ENCODE measurements at regions of chr19 and their contacts with region 1.

Region 1: GRCh38 chr19:40348125-40348913 is at the starts of genes C19orf47 and PLD3:
- DNase-seq: peak; percentile 99 to 100
- H3K4me3 ChIP-seq: peak within 1 kb of the TSS; percentile 80 to 94
- H3K27ac ChIP-seq: peak within 1 kb of the TSS; percentile 51 to 85
- H3K4me1 ChIP-seq: peaks cover 4 to 10% of the 10 kb centered on the region in 2 donors
- H3K27me3 ChIP-seq: no peaks in the 10 kb centered on the region
- CTCF ChIP-seq: no peak
- total RNA-seq, gene C19orf47: 10.4 TPM
- total RNA-seq, gene PLD3: 345 TPM

Region 2: DNA sequence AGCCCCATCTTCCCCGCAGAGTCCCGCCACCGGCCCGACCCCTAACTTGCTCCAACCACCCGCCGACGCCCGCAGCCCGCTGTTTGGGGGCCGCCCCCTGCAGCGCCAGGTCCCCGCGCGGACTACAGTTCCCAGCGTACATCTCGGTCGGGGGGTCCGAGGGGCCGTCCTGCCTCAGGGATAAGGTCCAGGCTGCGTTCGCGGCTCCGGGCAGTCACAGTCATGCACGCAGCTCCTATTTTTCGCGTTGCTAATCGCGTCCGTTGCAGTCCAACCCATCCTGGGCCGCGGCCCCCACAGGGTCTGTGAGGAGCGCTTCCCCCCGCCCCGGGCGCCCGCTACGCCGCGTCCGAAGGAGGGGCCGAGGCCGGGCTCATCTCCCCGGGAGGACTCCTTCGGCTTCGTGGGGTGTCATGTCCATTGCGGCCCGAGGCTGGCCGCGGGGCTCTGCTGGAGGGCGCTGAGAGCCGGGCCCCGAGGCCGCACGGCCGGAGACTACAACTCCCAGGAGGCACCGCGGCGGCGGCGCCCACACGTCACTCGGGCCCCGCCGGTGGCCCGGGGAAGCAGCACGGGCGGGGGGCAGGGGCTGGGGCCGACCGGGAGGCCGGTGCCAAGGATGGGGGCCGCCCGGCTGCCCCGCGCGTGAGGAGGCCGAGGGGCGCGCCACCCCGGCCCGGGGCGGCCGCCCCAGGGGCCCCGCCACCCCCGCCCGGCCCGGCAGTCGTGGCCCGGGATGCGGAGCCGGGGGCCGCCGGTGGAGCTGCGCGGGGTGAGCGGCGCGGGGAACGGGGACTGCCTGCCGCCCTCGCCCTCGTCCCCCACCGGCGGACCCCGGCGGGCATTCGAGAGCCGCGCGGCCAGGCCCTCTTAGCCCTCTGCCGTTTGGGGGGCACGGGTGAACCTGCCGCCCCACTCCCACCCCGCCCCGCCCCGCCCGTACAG is 157.2 kb before region 1 on chr19 and contains the start of gene MAP3K10:
- intact Hi-C with region 1: loop called (anchors 5 kb)
- DNase-seq: peak in 1 of 2 donors; percentile 86
- H3K4me3 ChIP-seq: peak within 1 kb of the TSS; percentile 75 to 99
- H3K27ac ChIP-seq: peak within 1 kb of the TSS; percentile 92 to 99
- H3K4me1 ChIP-seq: peaks cover 9 to 22% of the 10 kb centered on the region in 2 donors
- H3K27me3 ChIP-seq: no peaks in the 10 kb centered on the region
- CTCF ChIP-seq: no peak
- total RNA-seq, gene MAP3K10: 19.4 TPM

Region 3: GRCh38 chr19:40383668-40384248 is 35.4 kb after region 1 on chr19:
- intact Hi-C with region 1: no loop called
- DNase-seq: no peak
- H3K4me3 ChIP-seq: no peak overlapping the region
- H3K27ac ChIP-seq: no peak overlapping the region
- H3K4me1 ChIP-seq: no peaks in the 10 kb centered on the region
- H3K27me3 ChIP-seq: no peaks in the 10 kb centered on the region
- CTCF ChIP-seq: no peak

Region 4: GRCh38 chr19:40403262-40403984 is 55.1 kb after region 1 on chr19:
- intact Hi-C with region 1: loop called (anchors 5 kb)
- DNase-seq: peak; percentile 63 to 95
- H3K4me3 ChIP-seq: peak overlapping the region; percentile 50 to 67
- H3K27ac ChIP-seq: peak overlapping the region; percentile 67 to 79
- H3K4me1 ChIP-seq: peaks cover 3 to 4% of the 10 kb centered on the region in 2 donors
- H3K27me3 ChIP-seq: no peaks in the 10 kb centered on the region
- CTCF ChIP-seq: peak in 1 of 3 experiments; percentile 13

Measured in ascending aorta (tissue), 2 donors.